Heart left ventricle (tissue), 16 donors: ENCODE measurements at regions of chr9 and their contacts with region 1.

Region 1: GRCh38 chr9:117487555-117488175 is 72.8 kb upstream of the ASTN2 start:
- DNase-seq: peak; percentile 39 to 79 (median 56)
- ATAC-seq: peak; percentile 84 to 95 (median 91)
- H3K4me3 ChIP-seq: peak overlapping the region in 1 of 12 donors; percentile 24
- H3K27ac ChIP-seq: no peak overlapping the region
- H3K4me1 ChIP-seq: peaks cover 0 to 5% (median 0%) of the 10 kb centered on the region in 12 donors
- H3K27me3 ChIP-seq: peaks cover 0 to 15% (median 0%) of the 10 kb centered on the region in 9 donors
- CTCF ChIP-seq: peak; percentile 79 to 94 (median 86)
- POLR2A ChIP-seq: no peak

Region 2: DNA sequence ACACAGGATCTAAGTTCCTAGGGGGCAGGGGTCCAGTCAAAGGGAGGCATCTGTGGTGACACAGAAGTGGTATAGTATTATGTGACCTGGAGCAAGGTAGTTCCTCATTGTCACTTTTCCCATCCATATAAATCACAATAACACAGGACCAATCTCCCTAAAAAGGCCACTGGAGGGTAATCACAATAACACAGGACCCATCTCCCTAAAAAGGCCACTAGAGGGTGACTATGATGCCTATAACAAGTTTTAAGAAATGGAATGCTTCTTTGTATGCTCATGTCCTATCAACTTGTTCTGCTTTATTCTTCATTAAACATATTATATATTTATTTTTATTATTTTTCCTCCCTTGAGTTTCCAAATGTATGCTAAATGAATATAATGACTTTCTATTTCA is 327.4 kb before region 1 on chr9:
- intact Hi-C with region 1: no loop called
- DNase-seq: no peak
- ATAC-seq: no peak
- H3K4me3 ChIP-seq: no peak overlapping the region
- H3K27ac ChIP-seq: no peak overlapping the region
- H3K4me1 ChIP-seq: no peaks in the 10 kb centered on the region
- H3K27me3 ChIP-seq: no peaks in the 10 kb centered on the region
- CTCF ChIP-seq: peak in 4 of 12 donors; percentile 7 to 31 (median 16)
- POLR2A ChIP-seq: no peak

Region 3: DNA sequence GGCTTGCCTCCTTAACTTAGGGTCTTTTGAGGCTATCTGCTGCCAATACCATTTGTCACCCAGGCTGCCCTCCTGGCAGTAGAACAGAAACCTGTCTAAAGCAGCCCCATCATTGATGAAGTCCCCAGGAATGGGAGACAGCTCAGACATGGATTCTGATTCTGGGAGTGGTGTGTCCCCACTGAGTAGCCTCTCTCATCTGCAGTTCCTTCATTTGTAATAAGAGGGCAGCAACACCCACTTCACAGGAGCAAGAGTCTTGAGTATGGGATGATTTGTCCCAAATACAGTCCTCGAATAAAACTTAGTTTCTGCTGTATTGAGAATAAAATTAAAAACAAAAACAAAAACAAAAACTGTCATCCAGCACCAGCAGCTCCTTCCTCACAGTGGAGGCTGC is 240.4 kb before region 1 on chr9:
- intact Hi-C with region 1: no loop called
- DNase-seq: no peak
- ATAC-seq: no peak
- H3K4me3 ChIP-seq: no peak overlapping the region
- H3K27ac ChIP-seq: no peak overlapping the region
- H3K4me1 ChIP-seq: no peaks in the 10 kb centered on the region
- H3K27me3 ChIP-seq: peaks cover 0 to 8% (median 0%) of the 10 kb centered on the region in 9 donors
- CTCF ChIP-seq: peak in 7 of 12 donors; percentile 10 to 50 (median 35)
- POLR2A ChIP-seq: no peak

Region 4: GRCh38 chr9:117555964-117556629 is 68.4 kb after region 1 on chr9:
- intact Hi-C with region 1: loop called in 1 of 10 experiments (anchors 5 kb)
- DNase-seq: peak in 2 of 5 donors; percentile 10 to 34
- ATAC-seq: peak in 1 of 4 donors; percentile 36
- H3K4me3 ChIP-seq: no peak overlapping the region
- H3K27ac ChIP-seq: no peak overlapping the region
- H3K4me1 ChIP-seq: no peaks in the 10 kb centered on the region
- H3K27me3 ChIP-seq: peaks cover 0 to 2% (median 0%) of the 10 kb centered on the region in 9 donors
- CTCF ChIP-seq: peak in 11 of 12 donors; percentile 17 to 58 (median 40)
- POLR2A ChIP-seq: no peak